GM10248 (cell line): ENCODE measurements at regions of chr12 and their contacts with region 1.

Region 1: GRCh38 chr12:48995061-48995879 is 3.9 kb downstream of the DDN start:
- DNase-seq: peak; percentile 83
- CTCF ChIP-seq: peak; percentile 81

Region 2: GRCh38 chr12:48924617-48925303 is 70.5 kb before region 1 on chr12:
- CTCF ChIA-PET with region 1: interaction called, 19 read pairs
- POLR2A ChIA-PET with region 1: no interaction called
- DNase-seq: peak; percentile 86
- CTCF ChIP-seq: peak; percentile 77

Region 3: DNA sequence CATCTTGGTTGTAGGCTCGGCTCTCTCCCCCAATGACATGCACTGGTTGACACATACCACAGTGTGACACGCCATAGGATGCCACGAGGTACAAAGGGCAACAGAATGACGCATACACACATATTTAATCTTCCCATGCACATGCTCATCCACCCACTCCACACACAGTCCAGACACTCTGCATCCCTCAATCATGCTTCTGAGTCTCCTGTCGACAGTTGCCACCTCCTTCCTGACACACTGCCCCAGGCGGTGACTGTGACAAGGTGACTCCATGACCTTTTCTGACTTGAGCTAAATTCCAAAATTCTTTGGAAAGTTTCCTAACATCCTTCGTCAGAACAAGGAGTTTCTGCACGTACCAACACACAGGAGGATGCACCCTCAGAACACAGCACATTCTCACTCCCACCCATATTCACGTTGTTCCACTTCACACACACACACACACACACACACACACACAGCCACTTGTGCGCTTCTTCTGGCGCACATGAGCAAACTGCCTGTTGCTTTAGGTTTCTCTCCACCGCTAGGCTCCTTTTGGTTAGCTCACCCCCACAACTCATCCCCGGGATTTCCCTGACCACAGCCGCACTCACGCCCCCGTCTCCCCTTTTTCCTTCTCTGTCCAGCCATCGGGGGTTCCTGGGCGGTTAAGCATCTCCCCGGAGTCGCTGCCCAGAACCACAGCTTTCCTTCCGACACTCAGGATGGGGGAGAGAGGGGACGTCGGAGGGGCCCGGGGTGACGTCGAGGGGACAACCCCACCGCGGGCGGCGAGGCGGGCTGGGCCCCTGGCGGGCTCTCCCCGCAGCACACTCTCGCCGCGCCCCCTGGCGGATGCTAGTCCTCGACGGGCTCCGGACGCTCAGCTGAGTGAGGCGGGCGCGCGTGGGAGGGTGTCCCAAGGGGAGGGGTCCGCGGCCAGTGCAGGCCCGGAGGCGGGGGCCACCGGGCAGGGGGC is 17.7 kb before region 1 on chr12:
- CTCF ChIA-PET with region 1: interaction called, 417 read pairs
- POLR2A ChIA-PET with region 1: interaction called, 4 read pairs
- DNase-seq: peak; percentile 87
- CTCF ChIP-seq: peak; percentile 72

Region 4: DNA sequence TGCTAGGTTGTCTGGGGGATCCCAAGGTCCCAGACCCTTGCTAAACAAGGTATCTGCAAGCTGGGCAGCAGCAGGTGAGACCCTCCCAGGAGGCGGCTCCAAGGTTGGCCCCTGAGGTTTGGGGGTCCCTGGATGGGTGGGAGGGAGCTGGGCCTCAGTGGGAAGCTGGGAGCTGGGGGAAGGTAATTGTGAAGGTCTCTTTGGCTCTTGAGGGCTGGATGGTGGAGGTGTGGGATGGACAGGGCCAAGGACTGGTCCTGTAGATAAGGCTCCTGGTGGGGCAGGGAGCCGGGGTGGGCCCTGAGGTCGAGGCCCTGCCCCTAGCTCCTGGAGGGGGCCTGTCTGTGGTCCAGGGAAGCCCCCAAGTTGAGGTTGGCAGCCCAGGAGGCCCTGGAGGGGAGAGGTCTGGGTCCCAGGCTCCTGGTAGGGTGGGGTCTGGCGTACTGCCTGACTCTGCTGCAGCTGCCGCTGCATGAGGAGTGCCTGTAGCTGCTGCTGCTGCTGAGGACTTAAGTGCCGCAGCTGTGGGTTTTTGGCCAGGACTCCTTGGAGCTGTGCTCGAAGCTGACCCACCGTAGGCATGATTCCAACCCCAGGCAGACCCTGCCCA is 36.4 kb after region 1 on chr12:
- CTCF ChIA-PET with region 1: interaction called, 13 read pairs
- POLR2A ChIA-PET with region 1: interaction called, 7 read pairs
- DNase-seq: no peak
- CTCF ChIP-seq: no peak

Region 5: GRCh38 chr12:49043856-49044258 is 48.6 kb after region 1 on chr12:
- CTCF ChIA-PET with region 1: interaction called, 18 read pairs
- POLR2A ChIA-PET with region 1: interaction called, 7 read pairs
- DNase-seq: peak; percentile 85
- CTCF ChIP-seq: peak; percentile 81